ENCODE measurements at regions of chr6 and their contacts with region 1.

Region 1: GRCh38 chr6:52826513-52826912 is 14.1 kb downstream of the GSTA5 start:
- DNase-seq: no peak
- ATAC-seq: no peak
- H3K4me3 ChIP-seq: no peak overlapping the region
- H3K27ac ChIP-seq: no peak overlapping the region
- H3K4me1 ChIP-seq: no peaks in the 10 kb centered on the region
- H3K27me3 ChIP-seq: no peaks in the 10 kb centered on the region
- CTCF ChIP-seq: no peak

Region 2: GRCh38 chr6:52098634-52099185 is 727.8 kb before region 1 on chr6:
- CTCF ChIA-PET with region 1: no interaction called
- POLR2A ChIA-PET with region 1: no interaction called
- intact Hi-C with region 1: no loop called
- DNase-seq: peak; percentile 23
- ATAC-seq: no peak
- H3K4me3 ChIP-seq: no peak overlapping the region
- H3K27ac ChIP-seq: no peak overlapping the region
- H3K4me1 ChIP-seq: no peaks in the 10 kb centered on the region
- H3K27me3 ChIP-seq: peaks cover 26% of the 10 kb centered on the region
- CTCF ChIP-seq: peak; percentile 28; the same call in 1 of the 2 replicates

Region 3: DNA sequence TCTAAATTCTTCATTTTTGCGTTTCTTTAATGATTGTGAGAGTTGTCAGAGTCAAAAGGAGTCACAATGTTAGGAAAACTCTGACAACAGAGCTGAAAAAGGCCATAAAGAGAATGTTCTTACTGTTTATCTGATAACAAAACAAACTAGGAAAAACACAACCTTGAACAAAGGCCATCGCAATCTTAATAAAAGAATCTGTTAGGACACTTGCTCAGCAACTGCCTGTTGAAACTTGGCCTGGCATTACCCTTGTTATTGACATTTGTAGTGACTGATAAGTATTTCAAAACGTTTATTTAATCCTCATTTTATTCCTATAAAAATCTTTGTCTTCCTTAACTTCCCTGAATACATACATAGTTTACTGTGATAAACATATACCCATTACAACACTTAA is 38.6 kb before region 1 on chr6:
- CTCF ChIA-PET with region 1: no interaction called
- POLR2A ChIA-PET with region 1: no interaction called
- intact Hi-C with region 1: loop called (anchors 2 kb)
- DNase-seq: no peak
- ATAC-seq: no peak
- H3K4me3 ChIP-seq: no peak overlapping the region
- H3K27ac ChIP-seq: no peak overlapping the region
- H3K4me1 ChIP-seq: no peaks in the 10 kb centered on the region
- H3K27me3 ChIP-seq: no peaks in the 10 kb centered on the region
- CTCF ChIP-seq: no peak

Measured in PC-3 (cell line).